ENCODE measurements at regions of chr7 and their contacts with region 1.

Region 1: GRCh38 chr7:84194543-84195271 is at the start of gene SEMA3A:
- DNase-seq: peak; percentile 81
- H3K4me3 ChIP-seq: peak within 1 kb of the TSS; percentile 56
- H3K27ac ChIP-seq: peak within 1 kb of the TSS; percentile 59
- H3K4me1 ChIP-seq: peaks cover 23% of the 10 kb centered on the region
- H3K27me3 ChIP-seq: no peaks in the 10 kb centered on the region
- CTCF ChIP-seq: no peak
- total RNA-seq, gene SEMA3A: 22.8 and 26.9 TPM in 2 replicates

Region 2: DNA sequence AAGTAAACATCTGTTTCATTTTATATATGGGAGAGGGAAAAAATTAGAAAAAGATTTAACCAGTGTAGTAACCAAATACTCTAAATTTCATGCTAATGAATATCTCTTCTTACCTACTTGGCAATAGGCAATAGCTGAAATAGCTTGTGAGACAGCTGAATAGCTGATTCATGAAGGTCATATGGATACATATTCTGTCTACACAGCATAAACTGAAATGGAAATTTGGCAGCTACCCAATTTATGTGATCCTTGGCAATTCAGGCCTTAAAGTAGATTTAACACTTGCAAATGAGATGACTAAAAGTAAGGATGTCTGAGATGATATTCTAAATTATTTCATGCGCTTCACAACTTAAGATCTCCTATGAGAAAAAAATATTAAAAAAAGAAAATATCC is 261.1 kb after region 1 on chr7:
- CTCF ChIA-PET with region 1: no interaction called
- POLR2A ChIA-PET with region 1: no interaction called
- intact Hi-C with region 1: loop called (anchors 10 kb)
- DNase-seq: peak; percentile 59
- H3K4me3 ChIP-seq: no peak overlapping the region
- H3K27ac ChIP-seq: no peak overlapping the region
- H3K4me1 ChIP-seq: peaks cover 15% of the 10 kb centered on the region
- H3K27me3 ChIP-seq: no peaks in the 10 kb centered on the region
- CTCF ChIP-seq: no peak

Region 3: GRCh38 chr7:84553711-84554110 is 359.0 kb after region 1 on chr7:
- CTCF ChIA-PET with region 1: no interaction called
- POLR2A ChIA-PET with region 1: interaction called, 11 read pairs
- intact Hi-C with region 1: no loop called
- DNase-seq: no peak
- H3K4me3 ChIP-seq: no peak overlapping the region
- H3K27ac ChIP-seq: no peak overlapping the region
- H3K4me1 ChIP-seq: no peaks in the 10 kb centered on the region
- H3K27me3 ChIP-seq: no peaks in the 10 kb centered on the region
- CTCF ChIP-seq: no peak

Measured in A673 (cell line).